ENCODE measurements at regions of chr20 and their contacts with region 1.

Region 1: DNA sequence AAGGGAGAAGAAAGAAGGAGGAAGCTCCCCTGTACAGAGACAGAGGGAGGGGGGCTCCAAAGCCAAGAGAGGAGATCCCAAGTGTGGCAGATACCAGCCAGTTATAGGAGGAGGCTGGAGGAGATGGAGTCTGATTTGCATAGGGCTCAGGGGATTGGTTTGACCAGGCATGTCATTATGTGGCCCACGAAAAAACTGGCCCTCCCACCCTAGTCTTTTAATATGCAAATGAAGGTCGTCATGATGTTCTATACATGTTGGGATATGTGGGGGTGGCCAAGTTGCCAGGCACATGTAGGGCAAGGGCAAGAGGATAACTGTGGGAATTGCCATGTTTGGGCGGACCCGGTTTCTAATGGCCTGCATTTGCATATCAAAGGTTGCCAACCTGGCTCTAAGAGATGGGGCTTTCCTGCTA is 17.6 kb upstream of the ZFP64 start:
- H3K4me3 ChIP-seq: no peak overlapping the region
- H3K27ac ChIP-seq: no peak overlapping the region
- H3K4me1 ChIP-seq: no peaks in the 10 kb centered on the region
- CTCF ChIP-seq: no peak

Region 2: DNA sequence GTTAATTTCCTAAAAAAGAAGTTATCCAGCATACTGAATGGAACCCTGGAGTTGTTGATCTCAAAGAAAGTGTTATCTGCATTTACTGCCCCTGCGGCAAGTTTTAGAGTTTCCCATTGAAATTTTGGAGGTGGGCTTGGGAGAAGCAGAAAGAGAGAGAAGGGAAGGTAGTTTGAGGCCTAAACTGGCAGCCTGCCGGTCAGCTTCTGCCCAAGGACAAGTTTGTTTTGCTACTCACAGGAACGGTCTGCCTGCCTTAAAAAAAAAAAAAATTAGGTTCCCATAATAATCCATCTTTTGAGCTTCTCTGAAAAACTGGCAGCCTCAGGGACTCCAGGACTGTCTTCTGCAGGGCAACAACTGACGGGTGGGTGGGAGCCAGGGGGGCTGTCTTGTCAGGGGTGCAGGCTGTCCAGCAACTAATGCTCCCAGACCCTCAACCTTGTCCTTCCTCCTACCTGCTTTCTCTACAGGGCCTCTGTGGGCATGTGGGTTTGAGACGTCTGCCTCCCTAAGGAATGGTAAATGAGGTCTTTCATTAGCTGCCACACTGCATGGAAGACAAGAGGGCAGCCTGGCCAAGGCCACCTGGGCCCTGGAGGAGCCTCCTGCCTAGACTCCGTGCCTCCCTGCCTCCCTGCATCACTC is 1010.2 kb before region 1 on chr20:
- CTCF ChIA-PET with region 1: no interaction called
- POLR2A ChIA-PET with region 1: interaction called, 14 read pairs
- H3K4me3 ChIP-seq: no peak overlapping the region
- H3K27ac ChIP-seq: no peak overlapping the region
- H3K4me1 ChIP-seq: no peaks in the 10 kb centered on the region
- CTCF ChIP-seq: no peak

Region 3: GRCh38 chr20:52224920-52225319 is 15.8 kb after region 1 on chr20:
- CTCF ChIA-PET with region 1: no interaction called
- POLR2A ChIA-PET with region 1: no interaction called
- H3K4me3 ChIP-seq: no peak overlapping the region
- H3K27ac ChIP-seq: no peak overlapping the region
- H3K4me1 ChIP-seq: no peaks in the 10 kb centered on the region
- CTCF ChIP-seq: no peak

Region 4: DNA sequence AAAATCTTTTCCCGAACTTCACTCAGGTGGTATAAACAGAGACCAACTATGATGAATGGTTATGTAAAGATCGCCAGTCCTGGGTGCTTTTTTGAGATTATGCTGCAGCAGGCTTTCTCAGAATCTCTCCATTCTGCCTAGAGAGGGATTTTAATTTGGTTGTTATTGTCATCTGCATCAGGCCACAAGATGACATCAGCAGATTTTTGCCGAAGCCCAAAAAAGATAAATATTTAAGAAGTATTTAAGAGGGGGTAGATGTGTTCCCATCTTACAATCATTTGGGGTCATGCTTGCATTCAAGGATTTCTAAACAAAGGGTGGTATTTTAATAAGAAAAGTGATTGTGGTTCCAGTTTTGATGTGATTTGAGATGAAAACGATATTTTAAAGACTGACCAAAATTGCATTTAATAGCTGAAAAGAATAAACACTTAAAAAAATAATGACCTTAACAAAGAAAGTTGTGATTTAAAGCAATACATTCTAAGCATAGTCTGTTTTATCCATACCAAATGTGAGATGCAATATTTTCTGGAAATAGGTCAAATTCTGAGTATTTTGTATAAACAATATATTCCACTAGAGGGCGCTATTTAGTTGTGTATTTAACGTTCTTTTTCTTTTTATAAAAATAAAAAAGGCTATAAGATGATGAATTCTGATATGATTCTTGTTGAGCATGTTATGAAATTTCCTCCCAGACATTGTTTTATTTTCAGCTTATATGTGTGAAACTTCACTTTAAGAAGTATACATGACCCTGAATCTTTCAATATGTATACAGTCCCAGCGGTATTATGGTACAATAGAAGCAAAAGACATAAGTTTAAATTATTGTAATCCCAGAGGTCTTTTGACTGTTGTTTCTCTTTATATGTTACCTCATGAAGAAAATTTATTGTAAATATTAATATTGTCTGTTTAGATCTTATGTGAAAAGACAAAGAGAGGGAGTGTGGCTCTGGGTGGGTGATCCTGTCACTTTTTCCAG is 33.4 kb after region 1 on chr20:
- CTCF ChIA-PET with region 1: no interaction called
- POLR2A ChIA-PET with region 1: no interaction called
- H3K4me3 ChIP-seq: no peak overlapping the region
- H3K27ac ChIP-seq: no peak overlapping the region
- H3K4me1 ChIP-seq: no peaks in the 10 kb centered on the region
- CTCF ChIP-seq: no peak